Psoas muscle (tissue), 8 donors: ENCODE measurements at regions of chr1 and their contacts with region 1.

Region 1: DNA sequence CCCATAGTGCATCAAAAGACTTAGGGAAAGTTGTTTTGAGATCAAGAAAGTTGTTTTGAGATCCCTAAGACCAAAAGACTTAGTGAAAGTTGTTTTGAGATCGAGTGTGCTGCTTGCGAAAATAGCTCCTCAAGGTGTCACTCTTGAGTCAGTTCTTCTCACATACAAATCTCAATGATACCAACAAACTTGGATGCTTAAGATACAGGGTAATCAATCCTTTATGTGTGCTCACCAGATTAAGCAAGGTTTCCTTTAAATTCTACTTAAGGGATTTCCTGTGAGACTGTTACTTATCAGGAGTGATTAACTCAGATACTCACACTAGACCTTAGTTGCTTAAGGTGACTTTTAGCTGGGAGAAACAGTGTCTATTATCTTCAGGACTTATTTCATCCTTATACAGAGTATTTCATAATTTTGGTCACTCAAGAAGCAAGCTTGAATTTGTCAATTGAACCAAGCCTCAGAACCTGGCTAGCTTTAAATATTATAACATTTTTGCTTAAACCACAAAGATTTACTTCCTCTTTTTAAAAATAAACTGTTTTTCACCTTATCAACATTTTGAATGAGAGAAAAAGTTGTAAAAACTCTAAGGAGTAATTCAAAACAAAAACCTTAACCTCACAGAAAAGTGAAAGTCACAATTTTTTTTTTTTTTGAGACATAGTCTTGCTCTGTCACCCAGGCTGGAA is 8.0 kb upstream of the RLF start:
- DNase-seq: no peak
- ATAC-seq: peak in 2 of 4 donors; percentile 54 to 79
- H3K4me3 ChIP-seq: no peak overlapping the region
- H3K27ac ChIP-seq: no peak overlapping the region
- H3K4me1 ChIP-seq: no peaks in the 10 kb centered on the region
- H3K27me3 ChIP-seq: no peaks in the 10 kb centered on the region
- CTCF ChIP-seq: peak; percentile 76

Region 2: DNA sequence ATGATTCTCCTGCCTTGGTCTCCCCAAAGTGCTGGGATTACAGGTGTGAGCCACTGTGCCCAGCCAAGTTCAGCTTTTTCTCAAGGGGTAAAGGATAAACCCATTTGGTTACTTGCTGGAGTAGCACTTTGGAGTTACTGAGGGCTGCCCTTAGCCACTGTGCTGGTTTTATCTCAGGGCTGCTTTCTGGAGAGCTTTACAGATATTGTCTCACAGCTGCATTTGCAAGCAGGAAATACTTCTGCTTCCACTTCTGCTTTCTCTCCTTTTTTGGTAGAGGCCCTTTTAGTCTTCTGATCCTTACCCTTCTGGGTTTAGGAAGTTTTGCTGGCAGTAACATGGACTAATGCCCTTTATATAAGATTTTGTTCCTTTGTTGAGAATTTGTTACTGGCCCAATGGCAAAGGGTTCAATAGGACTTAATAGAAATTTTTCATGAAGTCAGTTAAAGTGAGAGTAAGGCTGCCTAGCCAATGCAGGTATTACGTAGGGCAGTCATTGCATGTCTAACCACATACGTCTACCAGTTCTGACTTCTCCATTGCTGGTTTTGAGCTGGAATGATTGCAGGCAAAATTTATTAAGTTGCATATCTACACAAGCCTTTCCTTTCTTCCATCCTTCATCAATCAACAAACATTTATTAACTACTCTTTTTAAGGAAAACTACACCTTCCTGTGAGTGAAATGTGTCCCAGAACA is 88.3 kb before region 1 on chr1:
- intact Hi-C with region 1: no loop called
- DNase-seq: no peak
- ATAC-seq: no peak
- H3K4me3 ChIP-seq: no peak overlapping the region
- H3K27ac ChIP-seq: peak overlapping the region; percentile 4
- H3K4me1 ChIP-seq: peaks cover 13% of the 10 kb centered on the region
- H3K27me3 ChIP-seq: no peaks in the 10 kb centered on the region
- CTCF ChIP-seq: no peak

Region 3: GRCh38 chr1:40315239-40315794 is 162.1 kb after region 1 on chr1:
- intact Hi-C with region 1: loop called in 1 of 2 experiments (anchors 5 kb)
- DNase-seq: peak; percentile 72 to 85
- ATAC-seq: peak; percentile 75 to 92 (median 86)
- H3K4me3 ChIP-seq: peak overlapping the region; percentile 51
- H3K27ac ChIP-seq: no peak overlapping the region
- H3K4me1 ChIP-seq: peaks cover 13% of the 10 kb centered on the region
- H3K27me3 ChIP-seq: peaks cover 0 to 51% (median 18%) of the 10 kb centered on the region in 3 donors
- CTCF ChIP-seq: peak; percentile 76

Region 4: DNA sequence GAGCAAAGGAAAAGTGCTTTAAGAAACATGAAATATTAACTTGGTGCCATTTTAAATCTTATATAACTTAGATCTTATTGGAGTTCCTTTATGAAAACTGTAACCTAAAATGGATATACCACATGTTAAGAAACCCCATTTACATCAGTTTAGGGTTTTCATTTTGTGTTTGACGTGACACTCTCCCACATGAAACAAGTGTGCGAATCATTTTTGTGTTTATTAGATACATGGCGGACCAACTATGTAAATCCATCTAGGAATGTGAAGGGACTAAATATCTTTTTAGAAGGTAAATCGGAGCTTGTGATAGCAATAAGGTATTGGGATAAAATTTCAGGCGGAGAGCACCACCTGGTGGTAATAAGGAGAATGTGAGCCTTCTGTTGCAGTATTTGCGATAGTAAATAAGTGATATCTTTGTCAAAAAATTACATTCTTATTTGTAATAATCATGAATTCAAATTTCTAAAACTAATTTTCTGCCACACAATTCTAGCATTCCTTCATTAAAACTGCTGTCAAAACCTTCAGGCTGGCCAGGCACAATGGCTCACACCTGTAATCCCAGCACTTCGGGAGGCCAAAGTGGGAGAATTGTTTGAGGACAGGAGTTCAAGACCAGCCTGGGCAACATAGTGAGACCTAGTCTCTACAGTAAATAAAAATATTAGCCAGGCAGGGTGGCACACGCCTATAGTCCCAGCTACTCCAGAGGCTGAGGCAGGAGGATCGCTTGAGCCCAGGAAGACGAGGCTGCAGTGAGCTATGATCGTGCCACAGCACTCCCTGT is 251.6 kb after region 1 on chr1:
- intact Hi-C with region 1: loop called in 1 of 2 experiments (anchors 5 kb)
- DNase-seq: no peak
- ATAC-seq: peak in 2 of 4 donors; percentile 67 to 77
- H3K4me3 ChIP-seq: peak overlapping the region; percentile 13
- H3K27ac ChIP-seq: no peak overlapping the region
- H3K4me1 ChIP-seq: no peaks in the 10 kb centered on the region
- H3K27me3 ChIP-seq: no peaks in the 10 kb centered on the region
- CTCF ChIP-seq: peak; percentile 88